Activated naive CD4-positive, alpha-beta T cell treated with anti-CD3 and anti-CD28 coated beads for 36 hours (primary cell): ENCODE measurements at regions of chr9 and their contacts with region 1.

Region 1: GRCh38 chr9:99253772-99254431 is 31.8 kb downstream of the SEC61B start:
- DNase-seq: peak; percentile 96
- H3K4me3 Mint-ChIP-seq: peak overlapping the region; percentile 44
- H3K27ac Mint-ChIP-seq: peak overlapping the region; percentile 84
- H3K4me1 Mint-ChIP-seq: peaks cover 34% of the 10 kb centered on the region
- H3K27me3 Mint-ChIP-seq: peaks cover 18% of the 10 kb centered on the region

Region 2: GRCh38 chr9:98807070-98807810 is 446.7 kb before region 1 on chr9 and contains the start of gene GALNT12:
- CTCF ChIA-PET with region 1: no interaction called
- intact Hi-C with region 1: loop called (anchors 2 kb)
- DNase-seq: peak; percentile 56
- H3K4me3 Mint-ChIP-seq: peak within 1 kb of the TSS; percentile 82
- H3K27ac Mint-ChIP-seq: no peak within 1 kb of the TSS
- H3K4me1 Mint-ChIP-seq: peaks cover 42% of the 10 kb centered on the region
- H3K27me3 Mint-ChIP-seq: no peaks in the 10 kb centered on the region
- total RNA-seq, gene GALNT12: 12.9 to 13.5 TPM

Region 3: DNA sequence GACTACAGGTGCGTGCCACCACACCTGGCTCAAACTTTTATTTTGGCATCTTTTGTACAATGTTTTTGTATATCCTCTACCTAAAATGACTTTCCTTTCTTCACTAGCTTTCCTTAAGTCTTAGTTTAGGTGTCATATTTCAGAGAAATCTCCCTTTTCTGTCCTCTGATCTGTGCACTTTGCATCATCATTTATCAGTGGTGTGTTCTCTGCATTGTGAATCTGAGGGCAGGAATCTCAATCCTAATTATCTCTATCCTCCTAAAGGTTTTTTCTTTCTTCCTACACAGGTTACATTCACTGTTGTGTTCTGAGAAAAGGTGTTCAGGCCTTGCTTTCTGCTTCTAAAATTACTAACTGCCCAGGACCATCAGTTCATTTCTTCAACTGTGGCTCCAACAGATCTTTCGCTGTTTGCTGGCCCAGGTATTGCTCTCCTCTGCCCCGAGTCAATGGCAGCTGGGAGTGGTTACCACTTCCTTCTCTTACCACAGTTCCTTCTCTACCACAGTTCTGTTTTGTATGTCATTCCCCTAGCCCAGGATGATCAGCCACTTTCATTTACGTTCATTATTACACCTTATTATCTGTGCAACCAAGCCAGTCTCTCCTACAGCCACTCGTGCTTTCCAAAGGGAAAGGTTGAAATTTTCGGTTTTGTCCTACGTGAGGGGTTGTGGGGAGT is 135.0 kb before region 1 on chr9:
- CTCF ChIA-PET with region 1: no interaction called
- intact Hi-C with region 1: loop called (anchors 5 kb)
- DNase-seq: peak; percentile 80
- H3K4me3 Mint-ChIP-seq: peak overlapping the region; percentile 70
- H3K27ac Mint-ChIP-seq: peak overlapping the region; percentile 90
- H3K4me1 Mint-ChIP-seq: peaks cover 85% of the 10 kb centered on the region
- H3K27me3 Mint-ChIP-seq: no peaks in the 10 kb centered on the region

Region 4: GRCh38 chr9:99221621-99222415 is 32.1 kb before region 1 on chr9 and contains the starts of genes ALG2 and SEC61B:
- CTCF ChIA-PET with region 1: interaction called, 4 read pairs
- intact Hi-C with region 1: loop called (anchors 1 kb)
- DNase-seq: peak; percentile 94
- H3K4me3 Mint-ChIP-seq: peak within 1 kb of the TSS; percentile 97
- H3K27ac Mint-ChIP-seq: peak within 1 kb of the TSS; percentile 98
- H3K4me1 Mint-ChIP-seq: peaks cover 56% of the 10 kb centered on the region
- H3K27me3 Mint-ChIP-seq: no peaks in the 10 kb centered on the region
- total RNA-seq, gene ALG2: 11.3 to 11.8 TPM
- total RNA-seq, gene SEC61B: 105 TPM

Region 5: GRCh38 chr9:99266255-99267023 is 12.5 kb after region 1 on chr9:
- CTCF ChIA-PET with region 1: interaction called, 3 read pairs
- intact Hi-C with region 1: loop called (anchors 1 kb)
- DNase-seq: peak; percentile 82
- H3K4me3 Mint-ChIP-seq: peak overlapping the region; percentile 19
- H3K27ac Mint-ChIP-seq: no peak overlapping the region
- H3K4me1 Mint-ChIP-seq: peaks cover 17% of the 10 kb centered on the region
- H3K27me3 Mint-ChIP-seq: peaks cover 1% of the 10 kb centered on the region

Region 6: DNA sequence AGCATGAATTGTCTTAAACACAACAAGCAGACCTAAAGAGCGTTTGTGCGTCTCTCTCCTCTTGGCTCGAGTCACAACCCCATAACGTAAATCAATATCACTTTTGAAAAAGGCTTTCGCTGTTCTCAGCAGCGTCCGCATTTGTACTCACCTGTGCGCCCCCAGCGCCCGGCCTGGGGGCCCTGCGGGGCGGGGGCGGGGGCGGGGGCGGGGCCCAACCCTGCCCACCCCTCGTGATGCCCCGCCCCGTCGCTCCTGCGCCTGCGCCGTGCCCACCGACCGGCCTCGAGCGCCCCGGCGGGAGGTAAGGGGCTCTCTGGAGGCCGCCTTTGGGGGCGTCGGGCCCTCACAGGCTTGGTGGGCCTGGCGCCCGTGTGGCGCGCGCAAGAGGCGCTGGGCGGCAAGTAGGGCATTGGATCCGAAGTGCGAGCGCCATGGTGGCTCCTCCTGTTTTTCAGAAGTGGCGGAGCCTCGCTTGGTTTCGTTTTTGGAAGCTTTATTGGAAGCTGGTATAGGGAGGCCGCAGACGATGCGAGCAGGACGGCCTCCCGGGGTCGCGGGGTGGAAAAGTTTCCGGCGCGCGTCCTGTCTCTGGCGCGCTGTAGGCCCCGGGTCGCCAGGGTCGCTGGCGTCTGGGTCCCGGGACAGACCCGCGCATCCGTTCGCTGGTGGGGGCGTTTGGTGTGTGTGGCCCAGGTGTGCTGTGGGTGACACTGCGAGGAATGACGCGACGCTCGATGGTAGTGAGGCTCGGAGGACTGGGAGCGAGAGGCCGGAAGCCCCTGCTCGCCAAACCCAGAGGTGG is 652.7 kb after region 1 on chr9 and contains the start of gene STX17:
- CTCF ChIA-PET with region 1: no interaction called
- intact Hi-C with region 1: loop called (anchors 5 kb)
- DNase-seq: peak; percentile 75
- H3K4me3 Mint-ChIP-seq: peak within 1 kb of the TSS; percentile 95
- H3K27ac Mint-ChIP-seq: peak within 1 kb of the TSS; percentile 95
- H3K4me1 Mint-ChIP-seq: peaks cover 22% of the 10 kb centered on the region
- H3K27me3 Mint-ChIP-seq: no peaks in the 10 kb centered on the region
- total RNA-seq, gene STX17: 28.1 to 31.6 TPM